Naive thymus-derived CD4-positive, alpha-beta T cell (primary cell): ENCODE measurements at regions of chr3 and their contacts with region 1.

Region 1: DNA sequence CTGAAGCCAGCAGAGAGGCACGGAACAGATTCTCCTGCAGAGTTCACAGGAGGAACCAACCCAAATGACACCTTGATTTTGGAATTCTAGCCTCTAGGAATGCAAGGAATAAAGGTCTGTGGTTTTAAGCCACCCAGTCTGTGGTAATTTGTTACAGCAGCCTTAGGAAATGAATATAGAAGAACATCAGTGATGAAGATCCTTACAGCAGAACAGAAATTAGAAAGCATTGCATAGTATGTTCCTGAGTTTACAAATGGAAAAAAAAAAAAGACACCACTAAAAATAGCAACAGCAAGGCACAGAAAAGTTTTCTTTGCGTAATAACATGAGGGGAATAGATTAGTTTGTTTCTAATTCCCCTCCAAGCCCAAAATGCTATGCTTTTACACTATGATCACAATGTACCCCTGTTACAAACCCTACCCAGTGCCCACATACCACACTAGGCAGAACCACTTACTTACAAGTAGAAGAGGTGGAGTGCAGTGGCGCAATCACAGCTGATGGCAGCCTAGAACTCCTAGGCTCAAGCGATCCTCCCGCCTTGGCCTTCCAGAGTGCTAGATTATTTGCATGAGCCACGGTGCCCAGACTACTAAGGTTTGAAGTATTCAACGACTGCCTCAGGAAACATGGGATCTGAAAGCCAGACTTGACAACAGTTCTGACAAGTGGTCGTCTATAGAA is 84.3 kb downstream of the SHQ1 start:
- DNase-seq: no peak
- ATAC-seq: no peak
- H3K4me3 ChIP-seq: no peak overlapping the region
- H3K4me3 Mint-ChIP-seq: no peak overlapping the region
- H3K27ac ChIP-seq: no peak overlapping the region
- H3K27ac Mint-ChIP-seq: peak overlapping the region in 6 of 9 donors; percentile 0 to 75 (median 18)
- H3K4me1 ChIP-seq: peaks cover 0 to 13% of the 10 kb centered on the region in 2 donors
- H3K4me1 Mint-ChIP-seq: peaks cover 13 to 66% (median 58%) of the 10 kb centered on the region in 7 donors
- H3K27me3 ChIP-seq: no peaks in the 10 kb centered on the region
- H3K27me3 Mint-ChIP-seq: no peaks in the 10 kb centered on the region

Region 2: DNA sequence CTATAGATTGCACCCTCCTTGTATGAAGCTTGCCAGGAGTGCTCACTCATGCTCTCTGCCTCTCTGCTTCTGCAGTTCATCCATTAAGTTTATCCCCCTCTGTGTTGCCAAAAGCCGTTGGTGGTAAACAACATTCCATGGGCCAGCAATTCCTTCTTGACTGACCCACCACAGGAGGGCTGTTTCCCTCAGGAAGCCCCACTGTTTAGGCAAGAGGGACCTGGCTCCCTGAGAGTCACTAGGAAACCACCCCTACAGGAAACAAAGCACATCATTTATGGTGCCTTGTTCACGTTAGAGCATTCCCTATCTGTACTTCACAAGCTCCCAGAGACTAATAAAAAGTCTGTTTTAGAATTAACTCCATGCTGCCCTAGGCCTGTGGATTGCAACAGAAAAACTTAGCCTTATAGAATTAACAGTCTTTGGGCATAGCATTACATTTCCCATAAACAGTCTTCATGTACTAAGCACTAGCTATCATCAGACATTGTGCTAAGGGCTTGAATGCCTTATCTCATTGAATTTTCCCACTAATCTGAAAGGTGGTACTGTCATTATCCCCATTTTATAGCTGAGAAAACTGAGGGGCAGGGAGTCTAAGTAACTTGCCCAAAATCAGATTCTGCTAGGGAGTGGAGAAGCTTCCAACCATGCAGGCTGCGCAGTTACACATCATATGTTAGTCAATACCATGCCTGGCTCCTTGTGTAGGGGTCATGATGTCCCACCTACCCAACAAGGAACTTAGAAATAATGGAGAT is 65.6 kb before region 1 on chr3:
- CTCF ChIA-PET with region 1: no interaction called
- POLR2A ChIA-PET with region 1: no interaction called
- intact Hi-C with region 1: no loop called
- DNase-seq: no peak
- ATAC-seq: no peak
- H3K4me3 ChIP-seq: no peak overlapping the region
- H3K4me3 Mint-ChIP-seq: no peak overlapping the region
- H3K27ac ChIP-seq: no peak overlapping the region
- H3K27ac Mint-ChIP-seq: peak overlapping the region in 1 of 9 donors; percentile 5
- H3K4me1 ChIP-seq: no peaks in the 10 kb centered on the region
- H3K4me1 Mint-ChIP-seq: peaks cover 0 to 6% (median 0%) of the 10 kb centered on the region in 7 donors
- H3K27me3 ChIP-seq: no peaks in the 10 kb centered on the region
- H3K27me3 Mint-ChIP-seq: peaks cover 0 to 8% (median 0%) of the 10 kb centered on the region in 5 donors

Region 3: GRCh38 chr3:72722930-72723726 is 40.8 kb before region 1 on chr3:
- CTCF ChIA-PET with region 1: no interaction called
- POLR2A ChIA-PET with region 1: no interaction called
- intact Hi-C with region 1: loop called in 1 of 2 experiments (anchors 5 kb)
- DNase-seq: no peak
- ATAC-seq: no peak
- H3K4me3 ChIP-seq: no peak overlapping the region
- H3K4me3 Mint-ChIP-seq: no peak overlapping the region
- H3K27ac ChIP-seq: no peak overlapping the region
- H3K27ac Mint-ChIP-seq: no peak overlapping the region
- H3K4me1 ChIP-seq: no peaks in the 10 kb centered on the region
- H3K4me1 Mint-ChIP-seq: peaks cover 0 to 9% (median 6%) of the 10 kb centered on the region in 7 donors
- H3K27me3 ChIP-seq: no peaks in the 10 kb centered on the region
- H3K27me3 Mint-ChIP-seq: no peaks in the 10 kb centered on the region

Region 4: GRCh38 chr3:72738752-72739530 is 25.0 kb before region 1 on chr3:
- CTCF ChIA-PET with region 1: interaction called, 15 read pairs
- POLR2A ChIA-PET with region 1: interaction called, 226 read pairs
- intact Hi-C with region 1: no loop called
- DNase-seq: peak; percentile 68 to 84 (median 76)
- ATAC-seq: peak; percentile 93
- H3K4me3 ChIP-seq: peak overlapping the region; percentile 80
- H3K4me3 Mint-ChIP-seq: peak overlapping the region; percentile 81 to 96 (median 94)
- H3K27ac ChIP-seq: peak overlapping the region; percentile 81
- H3K27ac Mint-ChIP-seq: peak overlapping the region; percentile 89 to 99 (median 97)
- H3K4me1 ChIP-seq: peaks cover 4 to 21% of the 10 kb centered on the region in 2 donors
- H3K4me1 Mint-ChIP-seq: peaks cover 15 to 35% (median 32%) of the 10 kb centered on the region in 7 donors
- H3K27me3 ChIP-seq: no peaks in the 10 kb centered on the region
- H3K27me3 Mint-ChIP-seq: peaks cover 0 to 3% (median 0%) of the 10 kb centered on the region in 5 donors

Region 5: GRCh38 chr3:72745146-72745999 is 18.5 kb before region 1 on chr3:
- CTCF ChIA-PET with region 1: no interaction called
- POLR2A ChIA-PET with region 1: interaction called, 226 read pairs
- intact Hi-C with region 1: no loop called
- DNase-seq: no peak
- ATAC-seq: no peak
- H3K4me3 ChIP-seq: no peak overlapping the region
- H3K4me3 Mint-ChIP-seq: no peak overlapping the region
- H3K27ac ChIP-seq: no peak overlapping the region
- H3K27ac Mint-ChIP-seq: peak overlapping the region in 1 of 9 donors; percentile 68
- H3K4me1 ChIP-seq: peaks cover 0 to 31% of the 10 kb centered on the region in 2 donors
- H3K4me1 Mint-ChIP-seq: peaks cover 10 to 57% (median 48%) of the 10 kb centered on the region in 7 donors
- H3K27me3 ChIP-seq: no peaks in the 10 kb centered on the region
- H3K27me3 Mint-ChIP-seq: no peaks in the 10 kb centered on the region